ENCODE measurements at regions of chr3 and their contacts with region 1.

Region 1: GRCh38 chr3:120182724-120183524 is 88.7 kb upstream of the GSK3B start:
- DNase-seq: no peak
- H3K4me3 ChIP-seq: no peak overlapping the region
- H3K4me3 Mint-ChIP-seq: no peak overlapping the region
- H3K27ac Mint-ChIP-seq: no peak overlapping the region
- H3K4me1 ChIP-seq: peaks cover 20% of the 10 kb centered on the region
- H3K4me1 Mint-ChIP-seq: peaks cover 30% of the 10 kb centered on the region
- H3K27me3 ChIP-seq: no peaks in the 10 kb centered on the region
- H3K27me3 Mint-ChIP-seq: no peaks in the 10 kb centered on the region
- CTCF ChIP-seq: peak in 1 of 2 experiments; percentile 53

Region 2: GRCh38 chr3:119831022-119831421 is 351.9 kb before region 1 on chr3:
- CTCF ChIA-PET with region 1: no interaction called
- POLR2A ChIA-PET with region 1: no interaction called
- intact Hi-C with region 1: loop called (anchors 5 kb)
- DNase-seq: no peak
- H3K4me3 ChIP-seq: no peak overlapping the region
- H3K4me3 Mint-ChIP-seq: no peak overlapping the region
- H3K27ac Mint-ChIP-seq: no peak overlapping the region
- H3K4me1 ChIP-seq: peaks cover 23% of the 10 kb centered on the region
- H3K4me1 Mint-ChIP-seq: peaks cover 26% of the 10 kb centered on the region
- H3K27me3 ChIP-seq: no peaks in the 10 kb centered on the region
- H3K27me3 Mint-ChIP-seq: no peaks in the 10 kb centered on the region
- CTCF ChIP-seq: peak in 1 of 2 experiments; percentile 29

Region 3: DNA sequence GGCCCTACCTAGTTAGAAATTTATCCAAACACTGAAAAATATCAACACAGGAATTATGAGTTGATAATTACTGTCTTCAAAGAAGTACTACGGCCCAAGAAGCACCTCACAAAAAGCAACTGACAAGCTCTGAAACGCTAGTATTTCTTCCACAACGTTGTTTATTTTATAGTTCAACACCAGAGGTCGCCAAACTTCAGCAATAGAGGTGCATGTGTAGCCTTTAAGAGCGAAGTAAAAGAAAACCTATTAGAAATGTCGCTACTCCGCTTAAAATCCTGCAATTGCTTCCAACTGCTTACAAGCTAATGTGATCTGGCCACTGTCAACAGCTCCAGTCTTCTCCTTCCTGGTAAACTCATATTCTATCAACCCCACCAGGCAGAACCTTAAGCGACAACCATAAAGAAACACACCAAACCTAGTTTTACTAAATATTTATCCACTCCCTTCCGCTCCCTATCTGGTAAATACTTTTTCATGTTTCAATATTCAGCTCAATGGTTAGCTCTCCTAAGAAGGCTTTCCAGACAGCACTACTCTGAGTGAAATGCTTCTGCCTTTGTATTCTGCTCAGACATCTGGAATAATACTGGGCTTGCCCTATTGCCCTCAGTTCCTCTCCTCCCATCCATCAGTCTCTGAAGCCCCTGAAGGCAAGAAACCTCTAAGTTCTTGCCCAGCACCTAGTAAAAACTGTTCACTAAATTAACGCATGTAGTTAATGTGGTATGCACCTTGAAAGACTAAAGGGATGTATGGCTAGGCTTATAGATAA is 290.8 kb before region 1 on chr3:
- CTCF ChIA-PET with region 1: no interaction called
- POLR2A ChIA-PET with region 1: no interaction called
- intact Hi-C with region 1: loop called (anchors 1 kb)
- DNase-seq: peak in 1 of 2 experiments; percentile 50
- H3K4me3 ChIP-seq: no peak overlapping the region
- H3K4me3 Mint-ChIP-seq: no peak overlapping the region
- H3K27ac Mint-ChIP-seq: no peak overlapping the region
- H3K4me1 ChIP-seq: no peaks in the 10 kb centered on the region
- H3K4me1 Mint-ChIP-seq: no peaks in the 10 kb centered on the region
- H3K27me3 ChIP-seq: no peaks in the 10 kb centered on the region
- H3K27me3 Mint-ChIP-seq: no peaks in the 10 kb centered on the region
- CTCF ChIP-seq: peak; percentile 50 to 59

Region 4: DNA sequence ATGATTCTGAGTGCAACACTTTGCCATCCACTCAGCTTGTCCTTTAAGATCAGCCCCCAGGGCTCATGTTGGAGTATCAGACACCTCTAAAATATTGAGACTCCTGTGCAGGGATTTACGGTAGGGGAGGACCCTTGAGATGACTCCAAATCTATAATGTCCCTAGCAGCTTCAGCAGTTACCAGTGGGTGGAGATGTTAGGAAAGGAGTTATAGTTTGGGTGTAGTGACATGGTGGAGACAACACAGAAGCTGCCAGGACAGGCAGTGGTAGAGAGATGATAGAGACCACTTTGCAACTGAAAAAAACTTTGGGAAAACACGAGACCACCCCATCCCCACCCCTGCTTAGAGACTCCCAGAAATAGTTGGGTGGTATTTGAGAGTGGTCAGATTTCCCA is 45.4 kb before region 1 on chr3:
- CTCF ChIA-PET with region 1: no interaction called
- POLR2A ChIA-PET with region 1: no interaction called
- intact Hi-C with region 1: loop called (anchors 1 kb)
- DNase-seq: no peak
- H3K4me3 ChIP-seq: no peak overlapping the region
- H3K4me3 Mint-ChIP-seq: no peak overlapping the region
- H3K27ac Mint-ChIP-seq: no peak overlapping the region
- H3K4me1 ChIP-seq: peaks cover 3% of the 10 kb centered on the region; the same call in 1 of the 2 replicates
- H3K4me1 Mint-ChIP-seq: peaks cover 18% of the 10 kb centered on the region
- H3K27me3 ChIP-seq: no peaks in the 10 kb centered on the region
- H3K27me3 Mint-ChIP-seq: no peaks in the 10 kb centered on the region
- CTCF ChIP-seq: peak in 1 of 2 experiments; percentile 31

Region 5: GRCh38 chr3:120147072-120147871 is 35.7 kb before region 1 on chr3:
- CTCF ChIA-PET with region 1: no interaction called
- POLR2A ChIA-PET with region 1: no interaction called
- intact Hi-C with region 1: loop called (anchors 2 kb)
- DNase-seq: peak; percentile 76 to 80
- H3K4me3 ChIP-seq: no peak overlapping the region
- H3K4me3 Mint-ChIP-seq: peak overlapping the region; percentile 18
- H3K27ac Mint-ChIP-seq: peak overlapping the region; percentile 96
- H3K4me1 ChIP-seq: peaks cover 55% of the 10 kb centered on the region
- H3K4me1 Mint-ChIP-seq: peaks cover 51% of the 10 kb centered on the region
- H3K27me3 ChIP-seq: no peaks in the 10 kb centered on the region
- H3K27me3 Mint-ChIP-seq: no peaks in the 10 kb centered on the region
- CTCF ChIP-seq: no peak

Region 6: GRCh38 chr3:120160050-120160449 is 22.9 kb before region 1 on chr3:
- CTCF ChIA-PET with region 1: no interaction called
- POLR2A ChIA-PET with region 1: interaction called, 4 read pairs
- intact Hi-C with region 1: loop called (anchors 1 kb)
- DNase-seq: peak; percentile 91 to 93
- H3K4me3 ChIP-seq: no peak overlapping the region
- H3K4me3 Mint-ChIP-seq: peak overlapping the region; percentile 38
- H3K27ac Mint-ChIP-seq: peak overlapping the region; percentile 90
- H3K4me1 ChIP-seq: peaks cover 58% of the 10 kb centered on the region
- H3K4me1 Mint-ChIP-seq: peaks cover 52% of the 10 kb centered on the region
- H3K27me3 ChIP-seq: no peaks in the 10 kb centered on the region; the same call in 1 of the 2 replicates
- H3K27me3 Mint-ChIP-seq: no peaks in the 10 kb centered on the region
- CTCF ChIP-seq: no peak